ENCODE measurements at regions of chr11 and their contacts with region 1.

Region 1: GRCh38 chr11:85647604-85648299 is at the start of gene TMEM126A:
- DNase-seq: peak; percentile 88
- H3K4me3 Mint-ChIP-seq: peak within 1 kb of the TSS; percentile 93
- H3K27ac Mint-ChIP-seq: peak within 1 kb of the TSS; percentile 91
- H3K4me1 Mint-ChIP-seq: peaks cover 25% of the 10 kb centered on the region
- H3K27me3 Mint-ChIP-seq: peaks cover 26% of the 10 kb centered on the region
- total RNA-seq, gene TMEM126A: 46.0 and 47.7 TPM in 2 replicates

Region 2: GRCh38 chr11:85472953-85473352 is 174.8 kb before region 1 on chr11:
- intact Hi-C with region 1: no loop called
- DNase-seq: no peak
- H3K4me3 Mint-ChIP-seq: no peak overlapping the region
- H3K27ac Mint-ChIP-seq: no peak overlapping the region
- H3K4me1 Mint-ChIP-seq: no peaks in the 10 kb centered on the region
- H3K27me3 Mint-ChIP-seq: no peaks in the 10 kb centered on the region

Region 3: GRCh38 chr11:85627998-85628770 is 19.6 kb before region 1 on chr11 and contains the start of gene TMEM126B:
- intact Hi-C with region 1: loop called (anchors 1 kb)
- DNase-seq: peak; percentile 96
- H3K4me3 Mint-ChIP-seq: peak within 1 kb of the TSS; percentile 97
- H3K27ac Mint-ChIP-seq: peak within 1 kb of the TSS; percentile 94
- H3K4me1 Mint-ChIP-seq: peaks cover 52% of the 10 kb centered on the region
- H3K27me3 Mint-ChIP-seq: peaks cover 6% of the 10 kb centered on the region
- total RNA-seq, gene TMEM126B: 52.5 and 57.2 TPM in 2 replicates

Region 4: DNA sequence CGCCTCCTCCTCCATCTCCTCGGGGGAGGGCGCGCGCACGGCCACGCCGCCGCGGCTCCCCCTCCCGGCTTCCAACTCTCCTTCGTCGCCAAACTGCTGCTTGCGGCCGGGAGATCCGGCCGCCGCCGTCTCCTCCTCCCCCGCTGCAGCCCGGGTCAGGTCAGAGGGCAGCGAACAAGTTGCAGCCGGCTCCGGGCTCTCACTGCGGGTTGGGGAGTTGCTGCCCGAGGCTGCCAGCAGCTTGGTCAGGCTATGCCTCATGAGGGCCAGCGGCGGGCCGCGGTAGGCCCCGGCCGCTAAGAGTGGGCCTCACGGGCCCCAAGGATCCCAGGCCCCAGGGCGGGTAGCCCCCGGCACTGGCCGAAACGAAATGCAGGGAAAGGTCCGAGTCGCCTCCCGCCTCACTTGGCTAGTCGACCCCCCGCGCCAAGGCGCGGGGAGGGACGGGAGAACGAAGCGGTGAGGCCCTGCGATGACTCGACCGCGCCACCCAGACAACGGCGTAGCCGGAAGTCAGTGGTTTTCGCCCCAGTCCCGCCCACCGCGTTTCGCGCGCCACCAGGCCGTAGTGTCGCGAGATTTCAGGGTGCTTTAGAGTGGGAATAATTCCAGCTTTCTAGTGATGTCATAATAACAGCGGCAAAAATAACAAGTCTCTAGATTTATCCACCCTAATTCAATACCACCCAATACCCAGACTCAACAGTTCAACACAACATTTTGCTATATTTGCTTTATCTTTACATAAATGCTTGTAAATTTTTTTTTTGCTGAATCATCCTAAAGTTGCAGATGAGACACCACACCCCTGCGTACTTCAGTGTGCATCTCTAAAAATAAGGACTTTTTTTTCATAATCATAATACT is 17.1 kb after region 1 on chr11 and contains the start of gene CREBZF:
- intact Hi-C with region 1: loop called (anchors 1 kb)
- DNase-seq: peak; percentile 94
- H3K4me3 Mint-ChIP-seq: peak within 1 kb of the TSS; percentile 99
- H3K27ac Mint-ChIP-seq: peak within 1 kb of the TSS; percentile 97
- H3K4me1 Mint-ChIP-seq: peaks cover 51% of the 10 kb centered on the region
- H3K27me3 Mint-ChIP-seq: no peaks in the 10 kb centered on the region
- total RNA-seq, gene CREBZF: 52.0 and 55.9 TPM in 2 replicates

Region 5: GRCh38 chr11:86483940-86484794 is 836.4 kb after region 1 on chr11:
- intact Hi-C with region 1: no loop called
- DNase-seq: no peak
- H3K4me3 Mint-ChIP-seq: no peak overlapping the region
- H3K27ac Mint-ChIP-seq: no peak overlapping the region
- H3K4me1 Mint-ChIP-seq: peaks cover 10% of the 10 kb centered on the region
- H3K27me3 Mint-ChIP-seq: no peaks in the 10 kb centered on the region

Region 6: GRCh38 chr11:87252869-87253268 is 1605.1 kb after region 1 on chr11:
- intact Hi-C with region 1: loop called (anchors 10 kb)
- DNase-seq: no peak
- H3K4me3 Mint-ChIP-seq: no peak overlapping the region
- H3K27ac Mint-ChIP-seq: peak overlapping the region; percentile 72
- H3K4me1 Mint-ChIP-seq: peaks cover 15% of the 10 kb centered on the region
- H3K27me3 Mint-ChIP-seq: no peaks in the 10 kb centered on the region

Region 7: GRCh38 chr11:87324817-87325489 is 1677.2 kb after region 1 on chr11:
- intact Hi-C with region 1: no loop called
- DNase-seq: no peak
- H3K4me3 Mint-ChIP-seq: no peak overlapping the region
- H3K27ac Mint-ChIP-seq: no peak overlapping the region
- H3K4me1 Mint-ChIP-seq: no peaks in the 10 kb centered on the region
- H3K27me3 Mint-ChIP-seq: no peaks in the 10 kb centered on the region